RWPE1 (cell line): ENCODE measurements at regions of chr1 and their contacts with region 1.

Region 1: GRCh38 chr1:199551967-199552565 is 475.4 kb upstream of the NR5A2 start:
- DNase-seq: peak; percentile 48
- H3K27ac ChIP-seq: no peak overlapping the region
- CTCF ChIP-seq: peak; percentile 83

Region 2: GRCh38 chr1:198756470-198756869 is 795.6 kb before region 1 on chr1:
- CTCF ChIA-PET with region 1: interaction called, 12 read pairs
- POLR2A ChIA-PET with region 1: no interaction called
- DNase-seq: peak; percentile 17
- H3K27ac ChIP-seq: no peak overlapping the region
- CTCF ChIP-seq: peak; percentile 59; the same call in 1 of the 2 replicates

Region 3: DNA sequence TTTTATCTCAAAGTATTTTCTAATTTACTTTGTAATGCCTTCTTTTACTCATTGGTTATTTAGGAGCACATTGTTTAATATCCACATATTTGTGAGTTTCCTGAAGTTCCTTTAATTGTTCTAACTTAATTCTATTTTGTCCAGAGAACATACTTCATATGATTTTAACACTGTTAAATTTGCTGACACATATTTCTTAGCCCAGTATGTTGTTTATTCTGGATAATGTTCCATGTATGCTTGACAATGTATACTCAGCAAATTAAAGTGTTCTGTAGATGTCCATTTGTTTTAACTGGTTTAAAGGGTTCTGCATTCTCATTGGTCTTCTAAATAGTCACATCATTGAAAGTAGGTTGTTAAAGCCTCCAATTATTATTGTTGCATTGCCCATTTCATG is 168.3 kb before region 1 on chr1:
- CTCF ChIA-PET with region 1: no interaction called
- POLR2A ChIA-PET with region 1: no interaction called
- DNase-seq: no peak
- H3K27ac ChIP-seq: no peak overlapping the region
- CTCF ChIP-seq: no peak

Region 4: DNA sequence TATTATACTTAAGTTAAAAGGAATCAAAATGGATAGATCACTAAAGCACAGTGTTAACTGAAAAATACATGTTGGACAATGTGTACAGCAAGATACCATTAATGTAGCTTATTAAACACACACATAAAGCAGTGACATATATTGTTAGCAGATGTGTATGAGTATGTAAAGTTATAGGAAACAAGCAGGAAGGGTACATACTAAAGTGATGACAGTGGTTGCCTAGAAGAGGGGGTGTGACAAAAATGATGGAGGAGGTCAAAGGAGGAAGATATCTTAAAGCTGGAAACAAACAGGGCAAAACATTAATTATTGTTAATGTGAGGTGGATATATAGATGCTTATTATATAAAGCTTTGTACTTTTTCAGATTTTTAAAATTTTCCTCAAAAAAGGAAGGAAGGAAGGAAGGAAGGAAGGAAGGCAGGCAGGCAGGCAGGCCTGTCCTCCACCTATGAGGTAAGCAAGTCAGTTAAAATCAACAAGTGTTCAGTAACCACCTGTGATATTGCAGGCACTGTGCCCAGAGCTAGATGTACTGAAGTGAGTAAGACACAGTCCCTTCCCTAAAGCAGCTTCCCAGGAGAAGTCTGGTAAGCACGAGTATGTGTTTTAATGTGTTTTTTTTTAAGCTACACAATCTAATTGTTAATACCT is 222.5 kb after region 1 on chr1:
- CTCF ChIA-PET with region 1: no interaction called
- POLR2A ChIA-PET with region 1: no interaction called
- DNase-seq: peak; percentile 88
- H3K27ac ChIP-seq: no peak overlapping the region
- CTCF ChIP-seq: no peak